HCT116 (cell line): ENCODE measurements at regions of chr1 and their contacts with region 1.

Region 1: DNA sequence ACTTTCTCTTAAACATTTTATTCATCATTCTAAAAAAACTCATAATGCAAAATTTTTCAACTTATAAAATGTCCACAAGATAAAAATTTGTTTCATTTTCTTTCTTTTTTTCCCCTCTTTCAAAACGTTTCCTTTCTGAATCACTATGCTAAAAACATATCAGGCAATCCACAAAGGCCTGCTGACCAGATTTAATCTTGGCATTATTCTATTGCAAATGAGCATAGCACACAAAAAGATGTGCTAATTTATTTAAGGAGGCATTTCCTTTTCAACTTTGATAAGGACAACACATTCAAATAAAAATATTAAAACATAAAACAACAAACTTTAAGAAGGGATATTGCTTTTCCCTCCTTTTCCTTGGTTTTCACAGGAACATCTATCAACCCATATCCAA is 215.3 kb upstream of the FOXD3 start:
- DNase-seq: no peak
- ATAC-seq: no peak
- H3K4me3 ChIP-seq: no peak overlapping the region
- H3K27ac ChIP-seq: no peak overlapping the region
- H3K4me1 ChIP-seq: no peaks in the 10 kb centered on the region
- H3K27me3 ChIP-seq: peaks cover 81% of the 10 kb centered on the region
- CTCF ChIP-seq: no peak
- POLR2A ChIP-seq: no peak
- RAD21 ChIP-seq: no peak

Region 2: GRCh38 chr1:62753031-62753965 is 353.8 kb before region 1 on chr1:
- CTCF ChIA-PET with region 1: no interaction called
- POLR2A ChIA-PET with region 1: no interaction called
- RAD21 ChIA-PET with region 1: no interaction called
- intact Hi-C with region 1: no loop called
- DNase-seq: no peak
- ATAC-seq: no peak
- H3K4me3 ChIP-seq: no peak overlapping the region
- H3K27ac ChIP-seq: no peak overlapping the region
- H3K4me1 ChIP-seq: no peaks in the 10 kb centered on the region
- H3K27me3 ChIP-seq: no peaks in the 10 kb centered on the region
- CTCF ChIP-seq: no peak
- POLR2A ChIP-seq: no peak
- RAD21 ChIP-seq: no peak

Region 3: GRCh38 chr1:63087966-63088365 is 19.1 kb before region 1 on chr1:
- CTCF ChIA-PET with region 1: no interaction called
- POLR2A ChIA-PET with region 1: no interaction called
- RAD21 ChIA-PET with region 1: no interaction called
- intact Hi-C with region 1: loop called (anchors 2 kb)
- DNase-seq: no peak
- ATAC-seq: peak; percentile 68; the same call in 1 of the 2 replicates
- H3K4me3 ChIP-seq: no peak overlapping the region
- H3K27ac ChIP-seq: no peak overlapping the region
- H3K4me1 ChIP-seq: no peaks in the 10 kb centered on the region
- H3K27me3 ChIP-seq: peaks cover 62% of the 10 kb centered on the region
- CTCF ChIP-seq: no peak
- POLR2A ChIP-seq: no peak
- RAD21 ChIP-seq: no peak